IMR-90 (cell line): ENCODE measurements at regions of chr12 and their contacts with region 1.

Region 1: GRCh38 chr12:99413751-99414150 is 233.8 kb upstream of the GARIN6 start:
- DNase-seq: no peak
- ATAC-seq: no peak
- H3K4me3 ChIP-seq: no peak overlapping the region
- H3K27ac ChIP-seq: no peak overlapping the region
- H3K4me1 ChIP-seq: no peaks in the 10 kb centered on the region
- H3K27me3 ChIP-seq: no peaks in the 10 kb centered on the region
- CTCF ChIP-seq: no peak
- POLR2A ChIP-seq: no peak
- RAD21 ChIP-seq: no peak

Region 2: DNA sequence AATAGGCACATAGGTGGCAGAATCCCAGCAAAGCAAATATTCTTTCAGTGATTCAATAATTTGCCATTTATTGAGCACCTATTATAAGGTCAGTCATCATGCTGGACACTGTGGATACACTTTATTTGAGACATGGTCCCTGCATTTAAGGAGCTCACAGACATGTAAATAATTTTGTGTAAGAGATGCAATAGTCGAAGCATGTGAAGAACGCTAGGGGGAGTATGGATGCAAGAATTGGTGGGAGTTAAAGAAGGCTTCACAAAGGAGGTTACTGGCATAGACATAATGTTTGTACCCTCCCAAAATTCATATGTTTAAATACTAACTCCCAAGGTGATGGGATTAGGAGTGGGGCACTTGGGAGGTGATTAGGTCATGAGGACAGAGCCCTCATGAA is 26.8 kb before region 1 on chr12:
- CTCF ChIA-PET with region 1: interaction called, 3 read pairs
- POLR2A ChIA-PET with region 1: interaction called, 10 read pairs
- dilution Hi-C with region 1: no loop called
- in situ Hi-C with region 1: no loop called
- intact Hi-C with region 1: no loop called
- DNase-seq: peak; percentile 8
- ATAC-seq: no peak
- H3K4me3 ChIP-seq: no peak overlapping the region
- H3K27ac ChIP-seq: no peak overlapping the region
- H3K4me1 ChIP-seq: no peaks in the 10 kb centered on the region
- H3K27me3 ChIP-seq: no peaks in the 10 kb centered on the region
- CTCF ChIP-seq: peak; percentile 48
- POLR2A ChIP-seq: no peak
- RAD21 ChIP-seq: peak; percentile 46